Adrenal gland (tissue), 19 donors: ENCODE measurements at regions of chr2 and their contacts with region 1.

Region 1: GRCh38 chr2:3728104-3729054 is 25.0 kb downstream of the DCDC2C start:
- DNase-seq: peak in 4 of 7 donors; percentile 26 to 60 (median 38)
- H3K4me3 ChIP-seq: no peak overlapping the region
- H3K27ac ChIP-seq: no peak overlapping the region
- H3K4me1 ChIP-seq: no peaks in the 10 kb centered on the region
- H3K27me3 ChIP-seq: no peaks in the 10 kb centered on the region
- CTCF ChIP-seq: peak; percentile 58 to 71 (median 68)
- POLR2A ChIP-seq: no peak

Region 2: GRCh38 chr2:3461801-3462492 is 266.4 kb before region 1 on chr2:
- intact Hi-C with region 1: no loop called
- DNase-seq: peak in 4 of 7 donors; percentile 8 to 59 (median 58)
- H3K4me3 ChIP-seq: no peak overlapping the region
- H3K27ac ChIP-seq: peak overlapping the region in 3 of 5 donors; percentile 44 to 73 (median 54)
- H3K4me1 ChIP-seq: peaks cover 3 to 23% of the 10 kb centered on the region in 2 donors
- H3K27me3 ChIP-seq: no peaks in the 10 kb centered on the region
- CTCF ChIP-seq: peak; percentile 72 to 99 (median 92)
- POLR2A ChIP-seq: no peak

Region 3: GRCh38 chr2:3778851-3779495 is 50.6 kb after region 1 on chr2:
- intact Hi-C with region 1: loop called in 1 of 2 experiments (anchors 5 kb)
- DNase-seq: no peak
- H3K4me3 ChIP-seq: no peak overlapping the region
- H3K27ac ChIP-seq: no peak overlapping the region
- H3K4me1 ChIP-seq: no peaks in the 10 kb centered on the region
- H3K27me3 ChIP-seq: peaks cover 4% of the 10 kb centered on the region
- CTCF ChIP-seq: no peak
- POLR2A ChIP-seq: no peak

Region 4: DNA sequence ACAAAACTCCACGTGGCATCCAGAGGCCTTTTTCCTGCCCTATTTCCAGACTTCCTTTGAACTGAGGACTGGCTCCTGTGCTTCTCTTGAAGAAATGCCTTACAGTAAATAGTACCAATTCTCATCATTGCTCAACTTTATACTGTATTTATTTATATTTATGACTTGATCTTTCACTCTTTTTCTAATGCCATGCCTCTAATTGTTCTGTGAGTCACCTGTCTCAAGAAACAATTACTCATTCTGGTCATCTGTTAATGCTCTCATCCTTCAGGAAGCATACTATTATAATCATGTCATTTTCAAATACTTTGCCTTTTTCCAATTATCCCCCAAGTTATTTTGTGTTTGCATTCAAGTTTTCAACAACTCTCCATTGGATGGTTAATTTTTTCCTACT is 60.9 kb after region 1 on chr2:
- intact Hi-C with region 1: no loop called
- DNase-seq: no peak
- H3K4me3 ChIP-seq: no peak overlapping the region
- H3K27ac ChIP-seq: no peak overlapping the region
- H3K4me1 ChIP-seq: no peaks in the 10 kb centered on the region
- H3K27me3 ChIP-seq: no peaks in the 10 kb centered on the region
- CTCF ChIP-seq: no peak
- POLR2A ChIP-seq: no peak

Region 5: DNA sequence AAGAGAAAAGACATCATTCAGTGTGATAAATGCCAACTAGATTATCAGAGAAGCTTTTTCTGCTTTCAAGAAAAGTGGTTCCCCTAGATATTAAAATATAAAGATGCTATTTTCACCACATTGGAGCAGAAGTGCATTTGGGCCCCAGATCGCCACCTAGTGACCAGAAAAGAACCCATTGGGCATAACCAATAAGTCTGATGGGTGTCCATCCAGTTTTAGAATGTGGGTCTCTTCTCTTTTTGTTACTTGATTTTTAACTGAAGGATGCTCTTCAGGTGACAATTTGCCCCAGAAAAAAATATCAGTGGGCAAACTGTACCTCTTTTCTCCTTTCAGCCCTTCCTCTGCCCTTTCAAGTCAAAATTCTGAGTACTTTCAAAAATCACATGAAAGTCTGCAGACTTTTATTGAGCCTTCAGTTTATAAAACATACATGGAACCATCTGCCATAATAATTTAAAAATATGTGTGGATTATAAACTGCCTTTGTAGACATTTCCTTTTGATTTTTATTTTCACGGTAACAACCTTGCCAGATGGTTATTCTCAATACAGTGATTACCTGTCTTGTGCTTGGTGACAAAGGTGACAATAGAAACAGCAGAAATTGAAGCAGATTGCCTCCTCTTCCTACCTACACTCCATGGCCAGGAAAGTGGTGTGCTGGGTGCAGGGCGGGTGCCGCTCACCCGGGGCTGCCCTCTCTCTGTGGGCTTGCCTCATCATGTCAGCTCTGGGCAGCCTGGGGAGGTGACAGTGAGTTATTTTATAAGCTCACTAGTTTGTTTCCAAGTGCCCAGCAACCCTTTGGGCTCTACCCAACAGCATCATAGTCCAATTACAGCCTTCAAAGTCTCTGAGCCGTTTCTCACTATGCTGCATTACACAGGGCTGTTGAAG is 99.5 kb after region 1 on chr2:
- intact Hi-C with region 1: loop called (anchors 5 kb)
- DNase-seq: peak; percentile 18 to 63 (median 43)
- H3K4me3 ChIP-seq: no peak overlapping the region
- H3K27ac ChIP-seq: no peak overlapping the region
- H3K4me1 ChIP-seq: no peaks in the 10 kb centered on the region
- H3K27me3 ChIP-seq: no peaks in the 10 kb centered on the region
- CTCF ChIP-seq: peak; percentile 28 to 63 (median 46)
- POLR2A ChIP-seq: no peak